ENCODE measurements at regions of chr20 and their contacts with region 1.

Region 1: GRCh38 chr20:48657475-48658470 is 170.0 kb downstream of the PREX1 start:
- DNase-seq: peak in 1 of 2 experiments; percentile 75
- H3K4me3 ChIP-seq: no peak overlapping the region
- H3K27ac ChIP-seq: no peak overlapping the region
- H3K4me1 ChIP-seq: no peaks in the 10 kb centered on the region; a peak in 1 of 7 replicates
- H3K27me3 ChIP-seq: no peaks in the 10 kb centered on the region
- CTCF ChIP-seq: peak; percentile 85 to 96 (median 87)
- EP300 ChIP-seq: no peak
- POLR2A ChIP-seq: no peak
- RAD21 ChIP-seq: peak; percentile 96 to 99

Region 2: DNA sequence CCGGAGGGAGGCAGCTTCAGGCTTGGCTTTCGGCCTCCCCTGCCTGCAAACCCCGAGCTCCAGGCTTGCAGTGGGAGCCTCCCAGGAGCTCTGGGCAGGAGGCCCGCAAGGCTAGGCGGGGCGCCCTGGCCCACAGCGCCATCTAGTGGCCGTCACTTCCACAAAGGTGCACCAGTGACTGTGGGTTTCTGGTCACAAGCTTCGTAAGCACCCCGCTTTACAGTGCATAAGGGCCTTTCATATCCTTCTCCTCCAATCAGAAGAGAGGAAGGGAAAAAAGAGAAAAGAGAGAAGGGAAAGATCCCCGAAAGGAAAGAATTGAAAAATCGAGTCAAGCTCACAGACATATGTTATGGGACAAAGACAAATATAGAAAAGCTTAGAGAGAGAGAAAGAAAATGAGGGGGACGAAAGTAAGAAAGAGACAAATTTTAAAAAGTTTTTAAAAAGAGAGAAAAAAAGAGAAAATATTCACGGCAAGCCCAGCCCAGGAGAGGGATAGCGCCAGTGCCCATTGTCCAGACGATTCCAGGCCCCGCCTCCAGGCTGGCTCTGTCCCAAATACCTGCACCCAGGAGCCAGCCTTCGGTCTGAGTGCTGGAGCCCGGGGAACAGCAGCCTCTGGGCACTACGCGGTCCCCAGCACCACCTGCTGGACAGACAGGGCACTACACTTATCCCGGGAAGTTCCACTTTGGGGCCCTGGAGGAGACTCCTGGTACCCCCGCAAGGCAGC is 37.1 kb before region 1 on chr20:
- CTCF ChIA-PET with region 1: no interaction called
- POLR2A ChIA-PET with region 1: no interaction called
- DNase-seq: peak; percentile 84 to 98
- H3K4me3 ChIP-seq: peak overlapping the region in 3 of 4 experiments; percentile 28 to 59 (median 36); a peak in 4 of 8 replicates
- H3K27ac ChIP-seq: no peak overlapping the region
- H3K4me1 ChIP-seq: peaks cover 0 to 5% (median 2%) of the 10 kb centered on the region in 4 experiments; a peak in 3 of 7 replicates
- H3K27me3 ChIP-seq: no peaks in the 10 kb centered on the region
- CTCF ChIP-seq: peak; percentile 93 to 98 (median 96)
- EP300 ChIP-seq: peak in 1 of 2 experiments; percentile 17; a peak in 1 of 3 replicates
- POLR2A ChIP-seq: no peak
- RAD21 ChIP-seq: peak; percentile 99

Region 3: GRCh38 chr20:48673556-48673955 is 15.8 kb after region 1 on chr20:
- CTCF ChIA-PET with region 1: interaction called, 27 read pairs
- POLR2A ChIA-PET with region 1: no interaction called
- DNase-seq: no peak
- H3K4me3 ChIP-seq: no peak overlapping the region
- H3K27ac ChIP-seq: no peak overlapping the region
- H3K4me1 ChIP-seq: no peaks in the 10 kb centered on the region
- H3K27me3 ChIP-seq: no peaks in the 10 kb centered on the region
- CTCF ChIP-seq: no peak
- EP300 ChIP-seq: no peak
- POLR2A ChIP-seq: no peak
- RAD21 ChIP-seq: no peak

Region 4: GRCh38 chr20:48697879-48698724 is 40.3 kb after region 1 on chr20:
- CTCF ChIA-PET with region 1: interaction called, 186 read pairs
- POLR2A ChIA-PET with region 1: no interaction called
- DNase-seq: no peak
- H3K4me3 ChIP-seq: no peak overlapping the region
- H3K27ac ChIP-seq: no peak overlapping the region
- H3K4me1 ChIP-seq: no peaks in the 10 kb centered on the region
- H3K27me3 ChIP-seq: no peaks in the 10 kb centered on the region
- CTCF ChIP-seq: no peak
- EP300 ChIP-seq: no peak
- POLR2A ChIP-seq: no peak
- RAD21 ChIP-seq: no peak

Region 5: DNA sequence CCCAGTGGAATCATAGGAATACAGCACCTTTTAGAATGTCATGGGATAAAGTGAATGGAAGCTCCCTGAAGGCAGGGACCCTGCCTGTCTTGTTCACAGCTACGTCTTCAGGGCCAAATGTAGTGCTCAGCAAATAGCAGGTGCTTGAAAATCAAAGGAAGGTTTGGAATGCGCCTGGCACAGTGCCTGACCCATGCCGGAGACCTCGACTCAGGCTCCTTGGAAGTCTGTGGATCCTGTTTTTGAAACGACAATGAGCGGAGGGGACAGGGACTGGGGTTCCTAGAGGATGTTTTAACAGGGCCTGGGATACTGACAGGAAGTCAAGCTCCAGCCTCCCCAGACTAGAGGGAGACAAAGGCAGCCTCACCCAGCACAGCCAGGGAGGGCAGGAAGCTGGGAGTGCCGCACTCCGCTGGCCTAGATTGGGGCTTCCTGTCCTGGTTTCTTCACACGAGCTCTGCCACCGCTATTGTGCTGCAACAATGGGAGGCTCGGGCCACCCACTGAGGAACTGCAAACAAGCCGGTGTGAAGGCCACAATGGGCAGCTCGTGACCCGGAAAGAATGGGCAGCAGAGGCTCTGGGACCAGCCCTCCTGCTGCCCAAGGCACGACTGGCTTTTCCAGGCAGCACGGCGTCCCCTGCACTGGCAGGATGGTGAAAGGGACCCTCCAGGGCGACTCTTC is 93.3 kb after region 1 on chr20:
- CTCF ChIA-PET with region 1: interaction called, 10 read pairs
- POLR2A ChIA-PET with region 1: no interaction called
- DNase-seq: peak; percentile 78 to 80
- H3K4me3 ChIP-seq: no peak overlapping the region; a peak in 1 of 8 replicates
- H3K27ac ChIP-seq: peak overlapping the region; percentile 51; the same call in 1 of the 2 replicates
- H3K4me1 ChIP-seq: peaks cover 19 to 50% (median 29%) of the 10 kb centered on the region in 4 experiments
- H3K27me3 ChIP-seq: peaks cover 0 to 3% (median 1%) of the 10 kb centered on the region in 4 experiments; a peak in 3 of 7 replicates
- CTCF ChIP-seq: no peak
- EP300 ChIP-seq: peak in 1 of 2 experiments; percentile 73; a peak in 1 of 3 replicates
- POLR2A ChIP-seq: 0 out of 3 replicates have a peak, but pooled peaks of 1 of the 2 experiments have one; percentile 37
- RAD21 ChIP-seq: no peak; a peak in 1 of 4 replicates

Region 6: GRCh38 chr20:48841847-48842529 is 184.2 kb after region 1 on chr20:
- CTCF ChIA-PET with region 1: interaction called, 15 read pairs
- POLR2A ChIA-PET with region 1: no interaction called
- DNase-seq: no peak
- H3K4me3 ChIP-seq: no peak overlapping the region
- H3K27ac ChIP-seq: no peak overlapping the region
- H3K4me1 ChIP-seq: peaks cover 0 to 9% (median under 1%) of the 10 kb centered on the region in 4 experiments; a peak in 4 of 7 replicates
- H3K27me3 ChIP-seq: 0 out of 7 replicates have a peak, but pooled peaks cover 0 to 2% (median 0%) of the 10 kb centered on the region in 4 experiments
- CTCF ChIP-seq: no peak
- EP300 ChIP-seq: no peak
- POLR2A ChIP-seq: no peak
- RAD21 ChIP-seq: no peak

Region 7: DNA sequence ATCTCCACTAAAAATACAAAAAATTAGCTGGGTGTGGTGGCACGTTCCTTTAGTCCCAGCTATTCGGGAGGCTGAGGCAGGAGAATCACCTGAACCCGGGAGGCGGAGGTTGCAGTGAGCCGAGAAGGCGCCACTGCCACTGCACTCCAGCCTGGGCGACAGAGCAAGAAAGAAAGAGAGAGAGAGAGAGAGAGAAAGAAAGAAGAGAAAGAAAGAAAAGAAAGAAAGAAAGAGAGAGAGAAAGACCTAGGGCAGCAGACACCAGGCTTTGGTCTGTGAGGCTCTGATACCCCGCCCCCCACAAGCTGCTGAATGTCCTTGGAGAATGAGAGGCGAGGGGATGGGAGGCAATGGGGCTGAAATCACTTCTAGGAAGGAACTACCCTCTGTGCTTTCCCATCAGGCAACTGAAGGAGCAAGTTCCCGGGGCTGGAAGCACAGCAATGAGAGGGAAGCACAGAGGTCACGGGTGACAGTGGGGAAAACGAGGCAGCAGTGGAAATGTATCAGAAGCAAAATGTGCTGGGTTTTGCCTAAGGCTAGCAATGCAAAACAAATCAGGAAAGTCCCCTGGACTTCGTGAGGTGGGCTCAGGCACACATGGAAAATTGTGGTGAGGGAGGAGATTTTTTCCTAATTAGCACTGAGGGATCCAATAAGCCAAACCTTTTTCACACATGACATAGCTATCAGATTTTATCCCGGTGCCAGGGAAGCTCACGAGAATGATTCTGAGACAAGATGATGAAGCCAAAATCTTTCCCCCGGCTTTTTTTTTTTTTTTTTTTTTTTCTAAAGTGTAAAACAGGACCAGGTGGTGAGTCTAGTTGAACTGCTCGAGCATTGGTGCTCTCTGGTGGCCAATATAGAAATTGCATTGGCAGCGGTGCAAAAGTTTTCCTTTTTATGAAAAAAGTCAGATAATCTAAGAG is 246.9 kb after region 1 on chr20:
- CTCF ChIA-PET with region 1: interaction called, 163 read pairs
- POLR2A ChIA-PET with region 1: interaction called, 4 read pairs
- DNase-seq: peak in 1 of 2 experiments; percentile 83
- H3K4me3 ChIP-seq: peak overlapping the region in 2 of 4 experiments; percentile 29 to 49; a peak in 5 of 8 replicates
- H3K27ac ChIP-seq: no peak overlapping the region
- H3K4me1 ChIP-seq: peaks cover 0 to 4% (median 3%) of the 10 kb centered on the region in 4 experiments; a peak in 3 of 7 replicates
- H3K27me3 ChIP-seq: no peaks in the 10 kb centered on the region; a peak in 1 of 7 replicates
- CTCF ChIP-seq: peak in 2 of 3 experiments; percentile 70 to 77; a peak in 3 of 4 replicates
- EP300 ChIP-seq: no peak
- POLR2A ChIP-seq: no peak
- RAD21 ChIP-seq: peak; percentile 87 to 92

Region 8: GRCh38 chr20:48962976-48963771 is 305.4 kb after region 1 on chr20:
- CTCF ChIA-PET with region 1: interaction called, 10 read pairs
- POLR2A ChIA-PET with region 1: no interaction called
- DNase-seq: no peak
- H3K4me3 ChIP-seq: no peak overlapping the region
- H3K27ac ChIP-seq: no peak overlapping the region
- H3K4me1 ChIP-seq: no peaks in the 10 kb centered on the region
- H3K27me3 ChIP-seq: no peaks in the 10 kb centered on the region
- CTCF ChIP-seq: no peak
- EP300 ChIP-seq: no peak
- POLR2A ChIP-seq: no peak
- RAD21 ChIP-seq: no peak

Measured in H1 (cell line).